GM10248 (cell line): ENCODE measurements at regions of chr11 and their contacts with region 1.

Region 1: DNA sequence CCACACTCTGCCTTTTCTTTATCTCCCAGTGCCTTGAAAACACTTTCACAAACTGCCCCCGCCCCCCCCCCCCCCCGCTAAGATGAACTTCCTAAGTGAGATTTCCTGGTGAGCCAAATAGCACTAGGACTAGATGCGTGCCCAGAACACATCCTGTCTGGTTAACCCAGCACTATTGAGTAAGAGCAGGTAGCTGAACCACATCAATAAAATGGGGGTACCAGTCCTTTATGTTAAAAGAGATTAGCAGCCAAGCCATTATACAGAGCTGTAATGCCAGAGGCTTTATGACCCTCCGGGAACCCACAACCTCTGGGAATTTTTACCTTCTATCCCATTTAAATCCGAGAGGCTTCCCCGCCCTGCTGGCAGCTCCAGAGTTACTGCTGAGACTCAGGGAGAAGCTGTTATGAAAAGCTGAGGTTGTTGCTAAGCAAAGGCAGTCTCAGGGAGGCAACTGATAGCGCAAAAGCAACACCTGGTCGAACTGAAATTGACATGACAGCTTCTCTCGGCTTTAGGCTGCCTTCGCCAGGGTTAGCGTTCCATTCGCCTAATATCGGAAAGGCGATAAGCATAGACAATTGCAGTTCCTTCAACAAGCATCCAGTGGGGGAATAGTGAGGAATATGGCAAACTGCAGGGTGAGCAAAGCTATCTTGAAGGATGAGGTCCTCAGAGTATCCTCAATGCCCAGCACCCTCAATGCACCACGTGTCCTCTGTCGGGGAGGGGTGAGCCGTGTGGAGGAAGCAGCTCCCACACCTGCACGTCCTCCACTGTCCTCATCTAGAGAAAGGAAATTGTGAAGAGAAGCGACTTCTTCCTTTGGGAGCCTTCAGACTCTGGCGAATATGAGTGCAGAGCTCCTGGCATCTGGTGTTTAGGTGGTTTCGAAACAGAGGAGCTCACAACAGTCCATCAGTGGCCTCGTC is 977.0 kb downstream of the NTM start:
- DNase-seq: no peak
- CTCF ChIP-seq: no peak

Region 2: DNA sequence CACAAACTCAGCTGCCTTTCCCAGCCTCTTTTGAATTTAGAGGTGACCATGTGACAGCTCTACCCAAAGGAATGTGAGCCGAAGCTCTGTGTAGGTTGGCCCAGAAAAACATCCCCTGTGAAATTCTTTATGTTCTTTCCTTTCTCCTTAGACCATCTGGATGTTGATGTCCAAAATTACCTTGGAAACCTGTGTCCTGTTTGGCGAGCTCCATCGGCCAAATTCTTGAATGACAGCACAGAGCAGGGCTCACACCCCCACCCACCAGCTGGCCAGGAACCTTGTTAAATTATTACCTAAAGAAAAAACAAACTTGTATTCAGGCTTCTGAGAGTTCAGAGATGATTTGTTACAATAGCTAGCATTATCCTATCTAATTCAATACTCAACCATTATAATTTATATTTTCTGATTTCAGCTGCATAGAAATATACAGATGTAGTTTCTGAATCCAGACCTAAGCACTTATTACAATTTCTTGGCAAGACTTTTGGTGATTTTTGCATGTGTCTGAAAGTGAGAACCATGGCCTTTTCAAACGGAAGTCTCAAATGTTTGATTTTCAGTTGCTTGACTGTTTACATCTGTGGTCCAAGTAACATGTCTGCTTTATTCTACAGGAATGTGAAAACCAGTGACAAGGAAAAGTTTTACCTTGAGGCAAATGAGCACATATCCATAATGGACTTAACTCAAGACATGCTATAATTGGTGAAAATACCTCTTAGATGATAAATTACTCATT is 422.8 kb before region 1 on chr11:
- CTCF ChIA-PET with region 1: no interaction called
- POLR2A ChIA-PET with region 1: no interaction called
- DNase-seq: no peak
- CTCF ChIP-seq: no peak

Region 3: DNA sequence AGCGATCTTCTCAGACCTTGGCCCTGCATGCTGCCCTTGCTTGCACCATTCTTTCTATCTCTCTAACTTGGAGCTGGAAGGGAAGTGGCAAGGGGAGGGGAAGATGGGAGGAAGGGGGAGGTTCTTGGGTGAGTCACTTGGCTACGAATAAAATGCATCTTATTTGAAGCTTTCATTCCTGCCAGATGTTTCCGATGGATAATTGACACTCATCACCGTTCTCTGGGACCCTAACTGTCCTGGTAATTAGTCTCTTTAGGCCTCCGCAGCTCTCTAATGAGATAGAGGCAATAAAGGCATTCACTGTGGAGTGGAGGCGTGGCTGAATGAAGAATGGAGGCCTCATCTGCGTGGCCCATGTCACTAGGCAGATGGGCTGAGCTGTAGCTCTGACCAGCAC is 16.9 kb before region 1 on chr11:
- CTCF ChIA-PET with region 1: interaction called, 11 read pairs
- POLR2A ChIA-PET with region 1: no interaction called
- DNase-seq: no peak
- CTCF ChIP-seq: no peak

Region 4: GRCh38 chr11:132704781-132705375 is 357.5 kb after region 1 on chr11:
- CTCF ChIA-PET with region 1: no interaction called
- POLR2A ChIA-PET with region 1: no interaction called
- DNase-seq: no peak
- CTCF ChIP-seq: no peak